ENCODE measurements at regions of chr7 and their contacts with region 1.

Region 1: DNA sequence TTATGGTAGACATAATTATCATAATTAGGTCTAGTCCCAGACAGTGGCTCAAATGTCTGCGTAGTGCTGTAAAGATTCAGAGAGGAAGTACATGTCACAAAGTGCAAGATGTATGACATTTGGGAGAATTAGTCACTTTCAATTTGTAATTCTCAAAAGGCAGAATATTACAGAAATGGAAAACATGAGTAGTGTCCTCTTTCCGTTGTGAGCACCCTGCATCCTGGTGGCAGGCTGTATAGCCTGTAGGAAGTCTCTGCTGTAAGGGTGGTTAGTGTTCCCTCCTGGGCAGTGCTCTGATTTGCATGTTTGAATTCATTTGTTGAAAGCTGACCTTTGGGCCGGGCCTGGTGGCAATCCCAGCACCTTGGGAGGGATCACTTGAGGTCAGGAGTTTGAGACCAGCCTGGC is 17.0 kb downstream of the CDK14 start:
- DNase-seq: peak; percentile 41
- CTCF ChIP-seq: no peak

Region 2: DNA sequence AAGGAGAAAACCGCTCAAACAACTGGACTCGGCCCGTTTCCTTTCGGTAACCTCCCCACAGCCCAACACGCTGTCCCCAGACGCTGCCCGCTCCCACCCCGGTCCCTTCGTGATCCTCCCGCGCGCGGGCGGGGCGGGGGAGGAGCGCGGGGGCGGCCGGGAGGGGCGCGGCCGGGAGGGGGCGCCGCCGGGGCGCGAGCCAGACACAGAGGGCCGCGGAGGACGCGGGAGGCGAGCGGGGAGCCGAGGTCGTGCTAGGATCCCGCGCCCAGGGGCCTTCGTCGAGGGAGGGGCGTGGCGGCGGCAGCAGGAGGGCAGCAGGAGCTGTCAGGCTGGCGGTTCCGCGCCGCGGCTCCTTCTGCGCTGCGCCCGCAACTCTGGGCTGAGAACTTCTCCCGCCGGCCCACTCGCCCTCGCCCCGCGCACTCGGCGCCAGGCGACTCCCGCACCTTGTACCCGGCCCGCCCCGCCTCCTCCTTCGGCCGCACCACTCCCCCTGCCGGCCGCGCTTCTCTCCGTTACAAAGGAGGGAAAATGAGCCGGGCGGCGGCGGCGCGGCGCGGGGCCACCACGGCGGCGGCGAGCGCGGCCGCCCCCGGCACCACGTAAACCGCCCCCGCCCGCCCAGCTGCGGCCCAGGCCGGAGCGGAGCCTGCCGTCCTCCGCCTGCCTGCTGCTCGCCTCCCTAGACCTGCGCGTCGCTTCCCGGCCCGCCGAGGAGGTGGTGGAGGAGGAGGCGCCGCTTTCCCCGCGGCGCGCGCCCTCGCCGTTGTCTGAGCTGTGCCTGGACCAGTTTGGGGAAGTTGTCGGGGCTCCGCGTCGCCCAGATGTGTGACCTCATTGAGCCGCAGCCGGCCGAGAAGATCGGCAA is 17.1 kb before region 1 on chr7 and contains the start of gene CDK14:
- CTCF ChIA-PET with region 1: interaction called, 16 read pairs
- POLR2A ChIA-PET with region 1: interaction called, 7 read pairs
- DNase-seq: peak; percentile 77
- CTCF ChIP-seq: peak; percentile 50

Measured in GM10248 (cell line).